Esophagus squamous epithelium (tissue), 5 donors: ENCODE measurements at regions of chr12 and their contacts with region 1.

Region 1: GRCh38 chr12:22083167-22083566 is 37.1 kb downstream of the CMAS start:
- DNase-seq: no peak
- H3K4me3 ChIP-seq: no peak overlapping the region
- H3K27ac ChIP-seq: no peak overlapping the region
- H3K4me1 ChIP-seq: no peaks in the 10 kb centered on the region
- H3K27me3 ChIP-seq: no peaks in the 10 kb centered on the region
- CTCF ChIP-seq: peak in 5 of 6 experiments; percentile 35 to 70 (median 54)
- POLR2A ChIP-seq: no peak

Region 2: GRCh38 chr12:21865846-21866245 is 217.3 kb before region 1 on chr12:
- intact Hi-C with region 1: no loop called
- DNase-seq: no peak
- H3K4me3 ChIP-seq: no peak overlapping the region
- H3K27ac ChIP-seq: no peak overlapping the region
- H3K4me1 ChIP-seq: no peaks in the 10 kb centered on the region
- H3K27me3 ChIP-seq: no peaks in the 10 kb centered on the region
- CTCF ChIP-seq: no peak
- POLR2A ChIP-seq: no peak

Region 3: GRCh38 chr12:21925296-21925913 is 157.8 kb before region 1 on chr12:
- intact Hi-C with region 1: no loop called
- DNase-seq: no peak
- H3K4me3 ChIP-seq: no peak overlapping the region
- H3K27ac ChIP-seq: no peak overlapping the region
- H3K4me1 ChIP-seq: no peaks in the 10 kb centered on the region
- H3K27me3 ChIP-seq: no peaks in the 10 kb centered on the region
- CTCF ChIP-seq: no peak
- POLR2A ChIP-seq: no peak

Region 4: DNA sequence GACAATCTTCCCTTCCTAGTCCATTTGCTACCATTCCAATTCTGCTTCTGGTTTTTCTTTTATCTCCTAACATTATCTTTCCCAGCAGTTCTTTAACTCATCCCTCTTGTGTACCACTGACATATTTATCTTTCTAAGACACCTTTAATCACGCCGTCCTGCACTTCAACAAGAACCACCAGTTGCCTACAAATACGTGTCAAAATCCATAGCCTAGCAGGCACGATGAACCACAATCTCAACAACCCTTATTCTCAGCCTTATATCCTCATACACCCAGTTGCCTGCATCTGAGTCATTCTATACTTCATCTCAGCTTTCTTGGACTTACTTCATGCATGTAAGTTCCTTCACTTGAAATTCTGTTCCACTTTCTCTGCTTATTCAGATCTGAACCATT is 267.7 kb after region 1 on chr12:
- intact Hi-C with region 1: no loop called
- DNase-seq: no peak
- H3K4me3 ChIP-seq: no peak overlapping the region
- H3K27ac ChIP-seq: no peak overlapping the region
- H3K4me1 ChIP-seq: no peaks in the 10 kb centered on the region
- H3K27me3 ChIP-seq: no peaks in the 10 kb centered on the region
- CTCF ChIP-seq: no peak
- POLR2A ChIP-seq: no peak

Region 5: DNA sequence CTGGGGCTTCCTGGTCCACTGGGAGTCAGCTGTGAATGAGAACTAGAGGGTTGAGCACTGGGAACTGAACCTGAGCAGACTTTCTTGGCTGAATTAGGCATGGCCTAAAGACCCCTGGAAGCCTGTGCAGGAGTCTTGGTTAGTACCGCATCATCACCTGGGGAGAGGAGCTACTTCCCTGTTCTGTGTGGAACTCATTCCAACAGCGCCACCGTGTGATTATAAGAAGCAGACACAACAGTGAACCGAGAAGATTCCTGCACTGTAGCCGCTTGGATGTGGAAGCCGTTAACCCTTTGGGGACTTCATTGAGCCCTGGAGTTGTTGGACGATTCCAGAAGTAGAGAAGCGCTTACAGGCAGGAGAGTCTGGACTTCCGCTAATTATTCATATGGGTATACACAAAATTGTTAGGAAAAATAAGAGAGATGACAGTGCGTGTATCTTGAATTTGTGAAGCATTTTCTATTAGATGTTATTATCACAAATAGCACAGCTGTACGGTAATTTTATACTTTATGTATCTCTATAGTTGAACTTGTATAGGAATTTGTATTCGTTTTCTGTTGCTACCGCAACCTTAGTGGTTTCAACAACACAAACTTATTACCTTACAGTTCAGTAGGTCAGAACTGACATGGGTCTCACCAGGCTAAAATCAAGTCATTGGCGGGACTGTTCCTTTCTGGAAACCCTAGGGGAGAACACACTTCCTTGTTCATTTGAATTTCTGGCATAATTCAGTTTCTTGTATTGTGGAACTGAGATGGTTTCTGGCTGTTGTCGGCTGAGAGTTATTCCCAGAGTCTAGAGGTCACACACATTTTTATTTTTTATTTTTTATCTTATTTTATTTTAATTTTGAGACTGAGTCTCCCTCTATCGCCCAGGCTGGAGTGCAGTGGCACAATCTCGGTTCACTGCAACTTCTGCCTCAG is 360.5 kb after region 1 on chr12:
- intact Hi-C with region 1: loop called (anchors 10 kb)
- DNase-seq: peak; percentile 2
- H3K4me3 ChIP-seq: no peak overlapping the region
- H3K27ac ChIP-seq: no peak overlapping the region
- H3K4me1 ChIP-seq: peaks cover 0 to 7% (median 4%) of the 10 kb centered on the region in 3 donors
- H3K27me3 ChIP-seq: no peaks in the 10 kb centered on the region
- CTCF ChIP-seq: peak in 5 of 6 experiments; percentile 67 to 84 (median 74)
- POLR2A ChIP-seq: no peak